CD4-positive, alpha-beta T cell (primary cell): ENCODE measurements at regions of chr6 and their contacts with region 1.

Region 1: DNA sequence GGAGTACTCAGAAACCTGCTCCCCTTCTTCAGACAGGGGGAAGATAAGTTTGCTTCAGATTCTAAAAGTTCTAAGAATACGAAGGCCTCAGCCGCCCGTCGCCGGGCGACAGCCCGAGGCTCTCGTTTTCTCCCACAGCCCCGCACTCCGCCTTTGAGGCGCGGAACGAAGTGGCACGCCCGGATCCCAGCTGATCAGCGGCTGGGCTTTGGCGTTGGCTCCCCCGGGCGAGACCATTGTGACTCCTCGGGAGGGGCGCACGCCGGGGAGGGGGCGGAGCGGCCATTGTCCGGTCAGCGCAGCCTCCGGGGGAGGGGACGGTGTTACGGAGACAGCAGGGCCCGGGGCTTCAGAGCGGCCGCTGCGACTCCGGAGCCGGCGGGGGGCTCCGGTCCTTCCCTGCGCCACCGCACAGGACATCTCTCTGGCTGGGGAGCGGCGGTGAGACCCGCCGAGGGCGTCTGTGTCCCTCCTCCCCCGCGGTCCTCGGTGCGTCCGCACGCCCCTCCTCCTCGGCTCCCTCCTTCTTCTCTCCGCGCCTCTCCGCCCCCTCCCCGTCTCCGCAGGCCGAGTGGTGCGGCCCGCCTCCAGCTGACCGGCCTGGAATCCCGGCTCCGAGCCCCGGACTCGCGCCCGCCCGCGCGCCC is at the start of gene ZFAND3:
- DNase-seq: peak; percentile 85 to 96 (median 90)
- ATAC-seq: peak; percentile 81
- H3K4me3 ChIP-seq: peak within 1 kb of the TSS; percentile 83
- H3K4me3 Mint-ChIP-seq: peak within 1 kb of the TSS; percentile 97
- H3K27ac ChIP-seq: peak within 1 kb of the TSS; percentile 89 to 94
- H3K27ac Mint-ChIP-seq: peak within 1 kb of the TSS; percentile 98
- H3K4me1 ChIP-seq: peaks cover 40% of the 10 kb centered on the region
- H3K4me1 Mint-ChIP-seq: peaks cover 64% of the 10 kb centered on the region
- H3K27me3 ChIP-seq: no peaks in the 10 kb centered on the region
- H3K27me3 Mint-ChIP-seq: no peaks in the 10 kb centered on the region
- CTCF ChIP-seq: no peak
- total RNA-seq, gene ZFAND3: 34.4 to 37.0 TPM

Region 2: GRCh38 chr6:36985808-36986703 is 833.2 kb before region 1 on chr6 and contains the start of gene MTCH1:
- CTCF ChIA-PET with region 1: no interaction called
- POLR2A ChIA-PET with region 1: interaction called, 11 read pairs
- intact Hi-C with region 1: no loop called
- DNase-seq: peak; percentile 73 to 96 (median 86)
- ATAC-seq: peak; percentile 85
- H3K4me3 ChIP-seq: peak within 1 kb of the TSS; percentile 90
- H3K4me3 Mint-ChIP-seq: peak within 1 kb of the TSS; percentile 99
- H3K27ac ChIP-seq: peak within 1 kb of the TSS; percentile 61 to 81
- H3K27ac Mint-ChIP-seq: no peak within 1 kb of the TSS
- H3K4me1 ChIP-seq: peaks cover 49% of the 10 kb centered on the region
- H3K4me1 Mint-ChIP-seq: peaks cover 23% of the 10 kb centered on the region
- H3K27me3 ChIP-seq: no peaks in the 10 kb centered on the region
- H3K27me3 Mint-ChIP-seq: no peaks in the 10 kb centered on the region
- CTCF ChIP-seq: no peak
- total RNA-seq, gene MTCH1: 231 to 239 TPM

Region 3: DNA sequence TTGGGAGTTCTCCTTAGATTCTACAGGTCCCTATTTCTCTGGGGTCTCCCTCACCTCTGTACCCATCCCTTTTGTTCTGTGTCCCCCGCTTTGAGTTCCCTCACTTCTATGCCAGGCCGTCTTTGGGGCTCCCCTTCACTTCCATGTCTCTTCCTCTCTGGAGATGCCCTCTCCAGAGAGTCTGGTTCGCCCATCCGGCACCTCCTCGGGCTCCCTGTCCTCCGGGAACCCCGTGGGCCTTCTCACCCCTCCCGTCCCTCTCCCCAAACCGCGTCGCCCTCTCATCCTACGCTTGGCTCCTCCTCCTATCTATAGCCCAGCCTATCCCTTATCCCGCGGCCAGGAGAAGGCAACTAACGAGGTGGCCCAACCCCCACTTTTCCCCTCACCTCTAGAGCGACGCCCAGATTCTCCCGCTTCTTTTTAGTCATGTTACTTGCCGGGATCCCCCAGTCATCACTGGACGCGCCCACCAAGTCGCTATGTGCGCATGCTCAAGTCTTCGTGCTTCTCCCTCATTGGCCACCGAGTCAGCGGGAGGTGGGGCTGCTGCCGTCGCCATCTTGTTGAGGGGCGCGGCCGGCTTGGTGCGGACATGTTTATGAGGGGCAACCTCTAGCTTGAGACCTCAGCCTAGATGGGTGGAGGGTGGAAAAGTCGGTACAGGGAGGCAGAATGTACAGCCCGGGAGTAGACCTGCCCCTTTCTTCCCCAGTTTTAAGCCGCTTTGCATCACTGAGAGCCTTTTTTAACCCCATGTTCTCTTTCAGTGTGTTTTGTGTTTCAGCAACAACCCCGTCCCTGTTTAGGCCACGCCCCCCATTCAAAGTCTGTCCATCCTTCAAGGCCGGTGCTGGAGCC is 319.6 kb before region 1 on chr6 and contains the start of gene CCDC167:
- CTCF ChIA-PET with region 1: no interaction called
- POLR2A ChIA-PET with region 1: interaction called, 6 read pairs
- intact Hi-C with region 1: loop called in 1 of 2 experiments (anchors 5 kb)
- DNase-seq: peak; percentile 90 to 98 (median 94)
- ATAC-seq: peak; percentile 66
- H3K4me3 ChIP-seq: peak within 1 kb of the TSS; percentile 86
- H3K4me3 Mint-ChIP-seq: peak within 1 kb of the TSS; percentile 93
- H3K27ac ChIP-seq: peak within 1 kb of the TSS; percentile 77 to 81
- H3K27ac Mint-ChIP-seq: peak within 1 kb of the TSS; percentile 97
- H3K4me1 ChIP-seq: peaks cover 87% of the 10 kb centered on the region
- H3K4me1 Mint-ChIP-seq: peaks cover 79% of the 10 kb centered on the region
- H3K27me3 ChIP-seq: no peaks in the 10 kb centered on the region
- H3K27me3 Mint-ChIP-seq: no peaks in the 10 kb centered on the region
- CTCF ChIP-seq: no peak
- total RNA-seq, gene CCDC167: 7.3 to 8.0 TPM

Region 4: GRCh38 chr6:37705239-37706051 is 113.9 kb before region 1 on chr6:
- CTCF ChIA-PET with region 1: no interaction called
- POLR2A ChIA-PET with region 1: no interaction called
- intact Hi-C with region 1: loop called in 1 of 2 experiments (anchors 10 kb)
- DNase-seq: peak; percentile 54 to 90 (median 70)
- ATAC-seq: peak; percentile 92
- H3K4me3 ChIP-seq: peak overlapping the region; percentile 64
- H3K4me3 Mint-ChIP-seq: peak overlapping the region; percentile 86
- H3K27ac ChIP-seq: no peak overlapping the region
- H3K27ac Mint-ChIP-seq: peak overlapping the region; percentile 55
- H3K4me1 ChIP-seq: peaks cover 16% of the 10 kb centered on the region
- H3K4me1 Mint-ChIP-seq: peaks cover 6% of the 10 kb centered on the region
- H3K27me3 ChIP-seq: no peaks in the 10 kb centered on the region
- H3K27me3 Mint-ChIP-seq: peaks cover 17% of the 10 kb centered on the region
- CTCF ChIP-seq: no peak

Region 5: DNA sequence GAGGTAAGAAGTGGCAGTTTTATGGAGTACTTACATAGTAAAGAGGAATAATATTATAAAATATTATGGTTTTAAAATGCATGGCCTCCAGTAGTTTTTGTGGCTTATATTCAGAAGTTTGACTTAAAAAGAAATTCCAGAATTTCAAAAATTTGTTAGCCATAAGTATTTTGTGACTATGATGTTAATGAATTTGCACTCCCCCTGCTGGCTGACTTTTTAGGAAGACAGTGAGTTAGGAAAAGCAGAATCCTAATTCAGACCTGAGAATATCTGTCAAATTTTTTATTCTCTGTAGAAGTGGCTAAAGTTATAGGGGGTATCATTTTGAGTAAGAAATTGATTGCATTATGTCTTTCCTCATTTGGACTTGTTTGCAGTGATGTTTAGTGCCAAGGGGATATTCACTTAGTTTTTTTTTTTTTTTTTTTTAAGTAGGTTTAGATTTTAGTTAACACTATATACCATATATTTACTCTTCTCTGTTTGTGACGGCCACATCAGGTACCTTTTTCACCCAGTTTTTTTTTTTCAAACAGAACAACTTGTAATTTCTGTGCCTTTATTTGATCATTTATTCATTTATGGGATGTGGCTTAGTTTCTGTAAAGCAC is 41.0 kb after region 1 on chr6:
- CTCF ChIA-PET with region 1: no interaction called
- POLR2A ChIA-PET with region 1: interaction called, 3 read pairs
- intact Hi-C with region 1: loop called in 1 of 2 experiments (anchors 5 kb)
- DNase-seq: peak in 5 of 14 experiments; percentile 3 to 66 (median 51)
- ATAC-seq: no peak
- H3K4me3 ChIP-seq: no peak overlapping the region
- H3K4me3 Mint-ChIP-seq: no peak overlapping the region
- H3K27ac ChIP-seq: no peak overlapping the region
- H3K27ac Mint-ChIP-seq: no peak overlapping the region
- H3K4me1 ChIP-seq: peaks cover 14% of the 10 kb centered on the region
- H3K4me1 Mint-ChIP-seq: peaks cover 82% of the 10 kb centered on the region
- H3K27me3 ChIP-seq: no peaks in the 10 kb centered on the region
- H3K27me3 Mint-ChIP-seq: no peaks in the 10 kb centered on the region
- CTCF ChIP-seq: peak; percentile 71

Region 6: GRCh38 chr6:38702558-38703397 is 883.5 kb after region 1 on chr6 and contains the start of gene GLO1:
- CTCF ChIA-PET with region 1: no interaction called
- POLR2A ChIA-PET with region 1: interaction called, 3 read pairs
- intact Hi-C with region 1: loop called in 1 of 2 experiments (anchors 5 kb)
- DNase-seq: peak; percentile 90 to 98 (median 94)
- ATAC-seq: peak; percentile 99
- H3K4me3 ChIP-seq: peak within 1 kb of the TSS; percentile 82
- H3K4me3 Mint-ChIP-seq: peak within 1 kb of the TSS; percentile 94
- H3K27ac ChIP-seq: peak within 1 kb of the TSS; percentile 82 to 84
- H3K27ac Mint-ChIP-seq: peak within 1 kb of the TSS; percentile 81
- H3K4me1 ChIP-seq: peaks cover 9% of the 10 kb centered on the region
- H3K4me1 Mint-ChIP-seq: peaks cover 29% of the 10 kb centered on the region
- H3K27me3 ChIP-seq: no peaks in the 10 kb centered on the region
- H3K27me3 Mint-ChIP-seq: peaks cover 15% of the 10 kb centered on the region
- CTCF ChIP-seq: no peak
- total RNA-seq, gene GLO1: 24.1 to 26.2 TPM